CD8-positive, alpha-beta T cell (primary cell): ENCODE measurements at regions of chr5 and their contacts with region 1.

Region 1: DNA sequence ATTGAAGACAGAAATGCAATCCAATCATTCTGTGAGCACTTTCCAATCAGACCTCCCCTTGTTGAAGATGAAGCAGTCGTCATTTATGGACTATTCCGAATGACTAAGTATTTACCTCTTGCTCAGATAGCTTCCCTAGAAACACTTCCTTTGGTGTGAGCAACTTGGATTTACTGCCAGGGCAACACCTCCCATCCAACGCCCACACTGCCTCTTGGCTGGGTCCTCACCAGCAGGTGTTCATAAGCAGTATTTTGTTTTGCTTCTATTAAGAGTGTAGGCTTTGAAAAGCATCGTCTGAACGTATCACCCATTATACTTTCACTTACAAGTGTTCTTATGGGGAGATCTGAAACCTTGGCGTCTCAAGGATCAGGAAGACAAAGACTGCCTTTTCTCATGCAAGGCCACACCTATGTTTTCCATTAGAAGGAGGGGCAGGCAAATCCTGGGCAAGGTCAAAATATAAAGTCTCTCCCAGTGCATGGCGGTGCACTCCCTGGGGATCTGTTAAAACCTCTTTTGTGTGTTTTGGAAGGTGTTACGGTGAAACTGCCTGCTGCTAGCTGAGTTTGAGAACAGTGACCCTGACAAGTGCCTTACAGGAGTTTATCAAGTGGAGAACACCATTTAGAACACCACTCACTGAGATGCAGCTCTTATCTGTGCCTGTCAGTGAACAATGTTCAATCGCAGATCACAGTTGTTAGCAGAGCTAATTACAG is 10.6 kb upstream of the MARCHF3 start:
- DNase-seq: no peak
- ATAC-seq: no peak
- H3K4me3 ChIP-seq: no peak overlapping the region
- H3K4me3 Mint-ChIP-seq: no peak overlapping the region
- H3K27ac ChIP-seq: no peak overlapping the region
- H3K27ac Mint-ChIP-seq: no peak overlapping the region
- H3K4me1 ChIP-seq: no peaks in the 10 kb centered on the region
- H3K4me1 Mint-ChIP-seq: no peaks in the 10 kb centered on the region
- H3K27me3 ChIP-seq: no peaks in the 10 kb centered on the region
- H3K27me3 Mint-ChIP-seq: no peaks in the 10 kb centered on the region
- CTCF ChIP-seq: no peak

Region 2: DNA sequence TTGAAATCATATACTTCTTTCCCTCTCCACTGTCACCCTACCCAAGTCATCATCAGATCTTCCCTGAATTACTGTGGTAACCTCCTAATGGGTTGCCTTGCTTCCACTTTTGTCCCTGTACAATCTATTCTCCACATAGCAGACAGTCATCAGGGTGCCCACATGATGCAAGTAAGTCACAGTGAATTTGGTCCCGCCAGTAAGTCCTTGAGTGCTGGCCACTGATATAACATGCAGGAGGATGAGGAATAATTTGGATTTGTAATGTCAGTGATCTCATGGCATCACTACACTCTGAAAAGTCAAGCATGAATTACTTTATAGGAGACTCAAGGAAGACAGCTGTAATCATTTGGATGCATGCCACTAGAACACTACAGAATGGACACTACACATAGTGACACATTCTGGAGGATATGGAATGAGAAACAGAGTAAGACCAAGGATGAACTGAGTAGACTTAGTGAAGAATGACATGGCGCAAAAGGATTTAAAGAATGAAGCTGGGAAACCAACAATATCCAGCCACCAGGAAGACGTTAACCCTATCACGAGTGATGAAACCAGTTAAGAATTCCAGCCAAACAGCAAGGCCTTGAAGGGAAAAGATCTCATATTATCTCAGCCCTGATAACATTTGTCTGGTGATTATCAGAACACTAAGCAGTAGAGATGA is 39.2 kb before region 1 on chr5:
- CTCF ChIA-PET with region 1: no interaction called
- POLR2A ChIA-PET with region 1: no interaction called
- intact Hi-C with region 1: loop called in 1 of 2 experiments (anchors 2 kb)
- DNase-seq: no peak
- ATAC-seq: no peak
- H3K4me3 ChIP-seq: no peak overlapping the region
- H3K4me3 Mint-ChIP-seq: no peak overlapping the region
- H3K27ac ChIP-seq: no peak overlapping the region
- H3K27ac Mint-ChIP-seq: no peak overlapping the region
- H3K4me1 ChIP-seq: no peaks in the 10 kb centered on the region
- H3K4me1 Mint-ChIP-seq: peaks cover 11% of the 10 kb centered on the region
- H3K27me3 ChIP-seq: no peaks in the 10 kb centered on the region
- H3K27me3 Mint-ChIP-seq: no peaks in the 10 kb centered on the region
- CTCF ChIP-seq: no peak

Region 3: GRCh38 chr5:127028822-127029457 is 12.0 kb before region 1 on chr5:
- CTCF ChIA-PET with region 1: no interaction called
- POLR2A ChIA-PET with region 1: no interaction called
- intact Hi-C with region 1: no loop called
- DNase-seq: peak in 1 of 9 experiments; percentile 17
- ATAC-seq: no peak
- H3K4me3 ChIP-seq: peak overlapping the region in 1 of 2 experiments; percentile 81
- H3K4me3 Mint-ChIP-seq: peak overlapping the region; percentile 93
- H3K27ac ChIP-seq: no peak overlapping the region
- H3K27ac Mint-ChIP-seq: no peak overlapping the region
- H3K4me1 ChIP-seq: peaks cover 8% of the 10 kb centered on the region
- H3K4me1 Mint-ChIP-seq: peaks cover 26% of the 10 kb centered on the region
- H3K27me3 ChIP-seq: no peaks in the 10 kb centered on the region
- H3K27me3 Mint-ChIP-seq: peaks cover 7% of the 10 kb centered on the region
- CTCF ChIP-seq: no peak